WTC11 (cell line): ENCODE measurements at regions of chr6 and their contacts with region 1.

Region 1: DNA sequence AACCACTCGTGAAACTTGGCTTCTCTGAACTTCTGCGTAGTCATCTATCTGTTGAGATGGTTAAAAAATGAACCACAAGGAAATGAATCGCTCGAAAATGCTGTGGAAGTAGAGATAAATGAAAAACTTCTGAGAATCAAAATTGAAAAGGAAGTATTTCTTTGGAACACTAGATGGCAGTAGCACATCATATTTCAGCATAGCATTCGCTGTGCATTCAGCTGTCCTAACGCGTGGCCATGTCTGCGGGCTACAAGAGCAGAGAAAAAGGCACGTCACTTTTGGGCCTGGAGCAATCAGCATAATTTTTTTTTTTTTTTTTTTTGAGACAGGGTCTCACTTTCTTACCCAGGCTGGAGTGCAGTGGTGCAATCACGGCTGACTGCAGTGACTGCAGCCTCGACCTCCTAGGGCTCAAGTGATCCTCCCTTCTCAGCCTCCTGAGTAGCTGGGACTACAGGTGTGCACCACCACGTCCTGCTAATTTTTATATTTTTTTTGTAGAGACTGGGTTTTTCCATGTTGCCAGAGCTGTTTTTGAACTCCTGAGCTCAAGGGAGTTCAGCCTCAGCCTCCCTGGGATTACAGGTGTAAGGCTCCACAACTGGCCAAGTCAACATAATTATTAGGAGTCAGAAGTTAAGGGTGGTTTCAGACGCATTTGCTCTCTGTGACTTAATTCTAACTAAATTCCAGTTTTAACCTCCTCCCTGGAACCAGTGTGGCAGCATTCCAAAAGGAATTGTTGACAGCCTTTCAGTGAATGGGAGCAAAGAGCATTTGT is 8.8 kb upstream of the PERP start:
- DNase-seq: peak; percentile 22
- ATAC-seq: peak; percentile 82
- H3K4me3 Mint-ChIP-seq: no peak overlapping the region
- H3K27ac Mint-ChIP-seq: no peak overlapping the region
- H3K4me1 Mint-ChIP-seq: peaks cover 6% of the 10 kb centered on the region
- H3K27me3 Mint-ChIP-seq: no peaks in the 10 kb centered on the region
- CTCF ChIP-seq: peak; percentile 70

Region 2: DNA sequence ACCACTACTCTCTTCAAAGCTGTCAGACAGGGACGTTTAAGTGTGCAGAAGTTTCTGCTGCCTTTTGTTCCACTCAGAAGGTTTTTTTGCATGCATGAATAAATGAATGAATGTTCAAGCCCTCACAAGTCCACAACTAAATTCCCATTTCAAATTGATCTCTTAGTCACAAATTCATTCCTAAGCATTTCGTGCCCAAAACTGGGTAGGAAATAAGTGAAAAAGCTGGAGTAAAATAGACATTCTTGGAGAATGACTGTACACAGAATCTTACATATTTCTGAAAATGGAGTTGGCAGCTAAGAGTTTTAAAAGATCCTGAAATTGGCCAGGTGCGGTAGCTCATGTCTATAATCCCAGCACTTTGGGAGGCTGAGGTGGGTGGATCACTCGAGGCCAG is 126.4 kb before region 1 on chr6:
- CTCF ChIA-PET with region 1: no interaction called
- POLR2A ChIA-PET with region 1: no interaction called
- DNase-seq: no peak
- ATAC-seq: no peak
- H3K4me3 Mint-ChIP-seq: no peak overlapping the region
- H3K27ac Mint-ChIP-seq: no peak overlapping the region
- H3K4me1 Mint-ChIP-seq: no peaks in the 10 kb centered on the region
- H3K27me3 Mint-ChIP-seq: peaks cover 4% of the 10 kb centered on the region; the same call in 1 of the 2 replicates
- CTCF ChIP-seq: no peak

Region 3: DNA sequence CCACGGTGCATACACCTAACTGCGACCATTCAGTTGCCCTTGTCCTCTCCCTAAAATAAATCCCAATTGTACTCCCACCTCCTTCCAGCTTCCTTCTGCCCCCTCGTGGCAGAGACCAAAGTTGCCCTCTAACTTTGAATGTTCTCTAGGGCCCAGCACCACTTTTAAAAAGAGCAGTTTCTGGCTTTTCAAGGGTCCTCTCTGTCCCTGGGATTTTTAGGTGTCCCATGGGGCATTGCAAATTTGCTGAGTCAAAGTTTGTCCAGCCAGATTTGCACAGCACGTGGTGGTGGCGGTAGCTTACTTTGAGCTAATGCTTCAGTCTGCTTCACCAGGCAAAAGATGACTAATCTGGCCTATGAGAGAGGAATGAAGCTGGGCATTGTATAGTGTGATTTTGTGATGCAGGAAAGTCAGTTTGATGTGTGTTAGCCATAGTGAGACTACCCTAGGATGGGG is 109.0 kb before region 1 on chr6:
- CTCF ChIA-PET with region 1: interaction called, 14 read pairs
- POLR2A ChIA-PET with region 1: interaction called, 4 read pairs
- DNase-seq: peak; percentile 71
- ATAC-seq: peak; percentile 87
- H3K4me3 Mint-ChIP-seq: no peak overlapping the region
- H3K27ac Mint-ChIP-seq: no peak overlapping the region
- H3K4me1 Mint-ChIP-seq: peaks cover 28% of the 10 kb centered on the region
- H3K27me3 Mint-ChIP-seq: no peaks in the 10 kb centered on the region
- CTCF ChIP-seq: peak; percentile 51

Region 4: DNA sequence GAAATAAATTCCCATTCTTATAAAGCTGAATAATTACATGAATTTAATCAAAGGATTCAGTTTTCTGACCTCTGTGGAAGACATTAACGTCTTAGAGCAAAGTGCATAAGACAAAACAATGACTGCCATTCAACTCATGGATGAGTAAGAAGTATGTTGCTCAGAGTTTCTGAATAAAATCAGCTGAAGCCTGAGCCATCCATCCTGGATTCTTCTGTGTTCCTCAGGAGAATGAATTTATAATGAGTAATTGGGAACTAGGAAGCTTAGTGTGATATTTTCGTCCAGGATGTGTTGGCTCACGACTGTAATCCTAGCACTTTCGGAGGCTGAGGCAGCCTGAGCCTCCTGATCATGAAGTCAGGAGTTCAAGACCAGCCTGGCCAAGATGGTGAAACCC is 71.6 kb before region 1 on chr6:
- CTCF ChIA-PET with region 1: no interaction called
- POLR2A ChIA-PET with region 1: no interaction called
- DNase-seq: no peak
- ATAC-seq: no peak
- H3K4me3 Mint-ChIP-seq: no peak overlapping the region
- H3K27ac Mint-ChIP-seq: no peak overlapping the region
- H3K4me1 Mint-ChIP-seq: peaks cover 3% of the 10 kb centered on the region; the same call in 1 of the 2 replicates
- H3K27me3 Mint-ChIP-seq: no peaks in the 10 kb centered on the region
- CTCF ChIP-seq: no peak

Region 5: GRCh38 chr6:138211027-138211581 is 95.0 kb after region 1 on chr6:
- CTCF ChIA-PET with region 1: interaction called, 73 read pairs
- POLR2A ChIA-PET with region 1: no interaction called
- DNase-seq: no peak
- ATAC-seq: peak; percentile 61
- H3K4me3 Mint-ChIP-seq: no peak overlapping the region
- H3K27ac Mint-ChIP-seq: no peak overlapping the region
- H3K4me1 Mint-ChIP-seq: peaks cover 21% of the 10 kb centered on the region
- H3K27me3 Mint-ChIP-seq: no peaks in the 10 kb centered on the region
- CTCF ChIP-seq: no peak

Region 6: DNA sequence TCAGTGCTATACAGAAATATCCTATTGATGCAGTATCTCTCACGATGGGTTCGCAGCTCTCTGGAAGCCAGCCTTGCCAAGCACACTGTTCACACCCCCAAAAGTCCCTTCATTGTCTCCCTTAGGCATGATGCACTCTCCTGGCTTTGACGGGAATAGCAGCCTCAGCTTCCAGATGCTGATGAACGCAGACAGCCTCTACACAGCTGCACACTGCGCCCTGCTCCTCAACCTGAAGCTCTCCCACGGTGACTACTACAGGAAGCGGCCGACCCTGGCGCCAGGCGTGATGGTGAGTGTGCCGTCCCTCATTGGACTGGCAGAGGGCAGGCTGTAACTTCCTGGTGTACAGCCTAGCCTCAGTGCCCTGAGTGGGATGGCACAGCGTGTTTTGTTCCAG is 162.3 kb after region 1 on chr6:
- CTCF ChIA-PET with region 1: interaction called, 45 read pairs
- POLR2A ChIA-PET with region 1: interaction called, 4 read pairs
- DNase-seq: peak; percentile 32
- ATAC-seq: peak; percentile 91
- H3K4me3 Mint-ChIP-seq: no peak overlapping the region
- H3K27ac Mint-ChIP-seq: no peak overlapping the region
- H3K4me1 Mint-ChIP-seq: 0 out of 2 replicates have a peak, but pooled peaks cover 2% of the 10 kb centered on the region
- H3K27me3 Mint-ChIP-seq: no peaks in the 10 kb centered on the region
- CTCF ChIP-seq: no peak

Region 7: GRCh38 chr6:138287144-138287955 is 171.3 kb after region 1 on chr6:
- CTCF ChIA-PET with region 1: interaction called, 43 read pairs
- POLR2A ChIA-PET with region 1: no interaction called
- DNase-seq: peak; percentile 77
- ATAC-seq: peak; percentile 81
- H3K4me3 Mint-ChIP-seq: no peak overlapping the region
- H3K27ac Mint-ChIP-seq: no peak overlapping the region
- H3K4me1 Mint-ChIP-seq: peaks cover 15% of the 10 kb centered on the region
- H3K27me3 Mint-ChIP-seq: no peaks in the 10 kb centered on the region
- CTCF ChIP-seq: peak; percentile 50; the same call in 1 of the 2 replicates

Region 8: GRCh38 chr6:138397128-138398122 is 281.4 kb after region 1 on chr6:
- CTCF ChIA-PET with region 1: interaction called, 33 read pairs
- POLR2A ChIA-PET with region 1: no interaction called
- DNase-seq: no peak
- ATAC-seq: no peak
- H3K4me3 Mint-ChIP-seq: no peak overlapping the region
- H3K27ac Mint-ChIP-seq: no peak overlapping the region
- H3K4me1 Mint-ChIP-seq: peaks cover 7% of the 10 kb centered on the region
- H3K27me3 Mint-ChIP-seq: no peaks in the 10 kb centered on the region; the same call in 1 of the 2 replicates
- CTCF ChIP-seq: no peak

Region 9: DNA sequence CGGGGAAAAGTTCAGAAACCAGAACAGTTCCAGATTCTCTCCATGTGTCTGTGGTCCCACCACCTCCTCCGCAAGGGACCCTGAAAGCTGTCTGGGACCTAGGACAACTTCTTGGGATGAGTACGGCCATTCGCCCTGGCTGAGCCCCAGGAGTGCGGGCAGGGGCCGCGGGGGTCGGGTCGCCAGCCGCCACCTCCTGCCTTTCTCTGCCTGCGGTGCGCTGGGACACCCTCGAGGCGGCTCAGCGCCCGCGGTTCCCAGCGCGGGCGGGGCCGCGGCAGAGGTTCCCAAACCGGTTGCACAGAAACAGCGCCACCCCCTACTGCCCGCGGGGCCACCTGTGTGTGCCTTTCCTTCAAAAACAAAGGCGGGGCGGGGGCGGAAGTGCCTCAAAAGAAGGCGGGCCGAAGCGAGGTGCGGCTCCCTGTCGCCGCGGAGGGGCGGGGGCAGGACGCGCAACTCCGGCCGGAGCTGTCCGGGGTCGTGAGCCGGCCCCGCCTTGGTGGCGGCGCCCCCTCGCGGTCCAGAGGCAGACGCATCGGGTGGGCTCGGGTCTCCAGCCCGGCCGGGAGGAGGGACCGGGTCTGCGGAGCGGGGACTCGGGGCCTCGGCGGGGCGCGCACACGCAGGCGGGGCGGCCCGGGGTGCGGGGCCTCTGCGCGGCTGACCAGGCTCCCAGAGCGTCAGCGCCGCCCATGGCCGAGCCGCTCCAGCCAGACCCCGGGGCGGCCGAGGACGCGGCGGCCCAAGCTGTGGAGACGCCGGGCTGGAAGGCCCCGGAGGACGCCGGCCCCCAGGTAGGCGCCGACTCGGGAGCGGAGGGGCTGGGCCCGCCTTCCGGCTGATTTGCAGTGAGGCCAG is 288.0 kb after region 1 on chr6 and contains the start of gene HEBP2:
- CTCF ChIA-PET with region 1: interaction called, 33 read pairs
- POLR2A ChIA-PET with region 1: no interaction called
- DNase-seq: peak; percentile 98
- ATAC-seq: peak; percentile 93
- H3K4me3 Mint-ChIP-seq: peak within 1 kb of the TSS; percentile 85
- H3K27ac Mint-ChIP-seq: peak within 1 kb of the TSS; percentile 32; the same call in 1 of the 2 replicates
- H3K4me1 Mint-ChIP-seq: peaks cover 17% of the 10 kb centered on the region
- H3K27me3 Mint-ChIP-seq: peaks cover 6% of the 10 kb centered on the region
- CTCF ChIP-seq: peak; percentile 60
- total RNA-seq, gene HEBP2: 31.9 to 40.9 TPM (median 36.1 TPM) in 3 replicates